ENCODE measurements at regions of chr1 and their contacts with region 1.

Region 1: DNA sequence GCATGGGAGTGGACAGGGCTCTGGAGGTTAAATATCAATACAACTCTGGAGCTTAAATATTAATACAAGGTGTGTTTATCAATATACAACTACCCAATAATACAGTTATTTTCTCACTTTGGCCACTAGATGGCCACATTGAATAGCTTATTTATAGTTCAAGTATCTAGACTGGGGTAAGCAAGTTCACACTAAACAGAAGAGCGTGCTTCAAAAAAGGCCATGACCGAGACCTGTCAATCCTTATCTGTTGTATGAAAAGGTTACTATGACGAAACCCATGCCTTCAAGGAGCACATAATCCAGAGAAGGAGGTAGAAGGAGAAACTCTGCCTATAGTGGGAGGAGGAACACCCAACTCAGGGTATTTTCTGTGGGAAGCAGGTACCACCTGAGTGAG is 29.1 kb downstream of the CHML start:
- DNase-seq: peak in 7 of 35 experiments; percentile 1 to 75 (median 8)
- ATAC-seq: peak; percentile 75 to 88 (median 78)
- H3K4me3 ChIP-seq: no peak overlapping the region
- H3K4me3 Mint-ChIP-seq: no peak overlapping the region
- H3K27ac ChIP-seq: no peak overlapping the region
- H3K27ac Mint-ChIP-seq: no peak overlapping the region
- H3K4me1 ChIP-seq: peaks cover 0 to 2% of the 10 kb centered on the region in 2 experiments
- H3K4me1 Mint-ChIP-seq: no peaks in the 10 kb centered on the region
- H3K27me3 ChIP-seq: no peaks in the 10 kb centered on the region
- H3K27me3 Mint-ChIP-seq: no peaks in the 10 kb centered on the region

Region 2: DNA sequence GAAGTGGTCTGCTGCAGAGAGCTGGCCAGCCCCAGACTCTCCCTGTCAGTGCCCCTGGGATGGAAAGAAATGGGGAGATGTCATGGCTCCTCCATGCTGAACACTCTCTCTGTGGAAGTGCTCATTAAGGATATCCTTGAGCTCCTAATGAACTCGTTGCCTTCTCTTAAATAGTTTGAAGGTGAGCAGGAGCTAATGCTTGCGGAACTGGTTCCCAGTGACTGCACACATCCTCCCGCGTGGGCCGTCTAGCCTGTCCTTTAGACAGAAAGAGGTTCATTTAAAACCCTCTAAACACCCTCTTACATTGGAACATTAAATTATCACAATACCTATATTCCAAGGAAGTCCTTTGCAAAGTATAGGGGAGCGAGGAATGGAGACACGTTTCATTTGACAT is 35.1 kb after region 1 on chr1:
- CTCF ChIA-PET with region 1: interaction called, 3 to 5 read pairs
- POLR2A ChIA-PET with region 1: interaction called in 1 of 2 experiments, 17 read pairs
- DNase-seq: no peak
- ATAC-seq: no peak
- H3K4me3 ChIP-seq: no peak overlapping the region
- H3K4me3 Mint-ChIP-seq: no peak overlapping the region
- H3K27ac ChIP-seq: no peak overlapping the region
- H3K27ac Mint-ChIP-seq: no peak overlapping the region
- H3K4me1 ChIP-seq: no peaks in the 10 kb centered on the region
- H3K4me1 Mint-ChIP-seq: peaks cover 0 to 3% (median 0%) of the 10 kb centered on the region in 3 donors
- H3K27me3 ChIP-seq: no peaks in the 10 kb centered on the region
- H3K27me3 Mint-ChIP-seq: peaks cover 0 to 4% of the 10 kb centered on the region in 2 donors

Region 3: DNA sequence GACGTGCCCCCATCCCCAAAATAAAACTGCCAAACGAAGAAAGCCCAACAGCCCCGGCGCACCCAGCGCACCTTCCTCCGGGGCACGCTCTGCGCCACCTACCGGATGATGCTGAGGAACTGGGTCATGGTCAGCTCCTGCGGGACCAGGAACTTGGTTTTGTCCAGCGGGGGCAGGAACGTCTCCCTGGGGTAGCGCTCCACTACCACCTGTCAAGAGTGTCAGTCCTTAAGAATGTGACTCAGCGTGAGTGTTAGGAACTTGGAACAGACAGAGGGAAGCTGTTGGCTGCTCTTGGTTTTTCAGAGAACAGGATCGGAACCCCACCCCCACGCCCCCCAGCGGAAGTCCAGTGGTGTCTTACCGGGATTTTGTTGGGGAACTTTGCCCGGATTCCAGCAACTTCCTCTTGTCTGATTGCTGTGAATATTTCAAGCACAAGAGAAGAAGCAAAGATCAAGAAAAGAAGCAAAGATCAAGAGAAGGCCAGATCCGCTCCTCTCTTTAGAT is 387.4 kb after region 1 on chr1:
- CTCF ChIA-PET with region 1: interaction called, 3 to 16 read pairs
- POLR2A ChIA-PET with region 1: no interaction called
- DNase-seq: peak in 32 of 35 experiments; percentile 2 to 55 (median 17)
- ATAC-seq: peak in 2 of 4 experiments; percentile 64 to 69
- H3K4me3 ChIP-seq: peak overlapping the region in 1 of 2 donors; percentile 42
- H3K4me3 Mint-ChIP-seq: peak overlapping the region; percentile 41 to 57 (median 57)
- H3K27ac ChIP-seq: no peak overlapping the region
- H3K27ac Mint-ChIP-seq: no peak overlapping the region
- H3K4me1 ChIP-seq: peaks cover 0 to 3% of the 10 kb centered on the region in 2 experiments
- H3K4me1 Mint-ChIP-seq: peaks cover 4 to 8% (median 6%) of the 10 kb centered on the region in 3 donors
- H3K27me3 ChIP-seq: peaks cover 0 to 15% of the 10 kb centered on the region in 2 experiments
- H3K27me3 Mint-ChIP-seq: peaks cover 0 to 7% of the 10 kb centered on the region in 2 donors

Measured in T-cell (primary cell).